PC-9 (cell line): ENCODE measurements at regions of chrX and their contacts with region 1.

Region 1: GRCh38 chrX:12946838-12947544 is 27.9 kb upstream of the TMSB4X start:
- DNase-seq: peak; percentile 87 to 94
- H3K4me3 ChIP-seq: peak overlapping the region; percentile 40; the same call in 1 of the 2 replicates
- H3K27ac ChIP-seq: peak overlapping the region; percentile 98
- H3K4me1 ChIP-seq: peaks cover 35% of the 10 kb centered on the region
- H3K27me3 ChIP-seq: no peaks in the 10 kb centered on the region
- CTCF ChIP-seq: peak; percentile 93

Region 2: DNA sequence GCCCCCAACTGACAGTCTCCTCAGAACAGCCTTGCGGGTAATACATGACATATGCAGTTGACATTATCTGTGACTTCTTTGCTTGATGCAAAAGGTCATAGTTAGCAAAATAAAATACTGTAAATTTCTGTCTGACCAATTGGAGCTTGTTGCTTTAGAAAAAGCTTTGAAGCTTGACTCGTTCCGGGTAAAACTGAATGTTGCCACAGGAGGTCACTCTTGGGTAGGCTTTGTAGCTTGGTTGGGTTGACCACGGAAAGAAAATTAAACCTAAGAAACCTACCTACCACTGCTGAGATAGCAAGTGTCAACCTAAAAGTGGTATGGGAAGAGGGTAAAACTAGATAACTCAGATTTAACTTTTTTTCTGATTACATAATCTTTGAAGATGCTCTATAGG is 132.6 kb before region 1 on chrX:
- CTCF ChIA-PET with region 1: interaction called, 4 read pairs
- POLR2A ChIA-PET with region 1: interaction called, 3 read pairs
- intact Hi-C with region 1: loop called (anchors 2 kb)
- DNase-seq: peak; percentile 44 to 51
- H3K4me3 ChIP-seq: no peak overlapping the region
- H3K27ac ChIP-seq: no peak overlapping the region
- H3K4me1 ChIP-seq: no peaks in the 10 kb centered on the region
- H3K27me3 ChIP-seq: no peaks in the 10 kb centered on the region
- CTCF ChIP-seq: peak; percentile 75

Region 3: DNA sequence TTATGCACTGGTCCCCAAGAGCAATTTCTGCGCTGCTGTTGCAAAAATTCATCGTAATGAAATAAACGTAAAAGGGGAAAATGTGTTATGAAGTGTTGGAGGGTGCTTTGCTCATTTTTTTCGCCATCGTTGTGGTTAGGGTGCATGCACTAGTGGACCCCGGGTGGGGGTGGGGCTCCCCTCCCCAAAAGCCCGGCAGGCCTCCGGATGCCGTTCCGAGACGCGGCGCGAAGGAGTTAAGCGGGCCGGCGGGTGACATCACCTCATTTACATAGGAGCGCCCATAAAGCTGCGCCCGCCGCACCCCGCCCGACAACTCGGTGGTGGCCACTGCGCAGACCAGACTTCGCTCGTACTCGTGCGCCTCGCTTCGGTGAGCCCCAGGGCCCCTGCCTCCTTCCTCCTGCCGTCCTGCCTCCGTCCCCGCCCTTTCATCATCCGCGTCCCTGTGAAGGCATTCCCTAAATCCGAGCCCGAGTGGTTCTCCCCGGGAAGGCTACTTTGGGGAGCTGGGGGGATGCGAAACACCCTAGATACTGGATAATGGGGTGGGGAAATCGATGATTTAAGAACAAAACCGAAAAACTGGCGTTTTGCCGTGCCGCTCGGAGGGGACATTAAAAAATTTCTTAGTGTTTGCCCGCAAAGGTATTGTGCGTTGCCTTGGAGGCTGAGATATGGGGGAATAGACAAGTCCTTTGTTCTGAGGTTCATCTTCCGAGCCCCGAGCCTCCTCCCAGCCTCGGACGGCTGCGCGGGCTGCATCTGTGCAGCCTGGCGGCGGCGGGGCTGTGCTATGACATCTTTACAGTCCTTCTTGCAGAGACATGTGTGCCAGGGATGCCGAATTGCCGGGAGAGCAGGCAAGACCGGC is 28.0 kb after region 1 on chrX and contains the start of gene TMSB4X:
- CTCF ChIA-PET with region 1: interaction called, 14 read pairs
- POLR2A ChIA-PET with region 1: interaction called, 15 read pairs
- intact Hi-C with region 1: loop called (anchors 1 kb)
- DNase-seq: peak; percentile 71 to 85
- H3K4me3 ChIP-seq: peak within 1 kb of the TSS; percentile 99
- H3K27ac ChIP-seq: peak within 1 kb of the TSS; percentile 99
- H3K4me1 ChIP-seq: peaks cover 36% of the 10 kb centered on the region
- H3K27me3 ChIP-seq: no peaks in the 10 kb centered on the region
- CTCF ChIP-seq: no peak
- total RNA-seq, gene TMSB4X: 2,589 and 3,588 TPM in 2 replicates

Region 4: DNA sequence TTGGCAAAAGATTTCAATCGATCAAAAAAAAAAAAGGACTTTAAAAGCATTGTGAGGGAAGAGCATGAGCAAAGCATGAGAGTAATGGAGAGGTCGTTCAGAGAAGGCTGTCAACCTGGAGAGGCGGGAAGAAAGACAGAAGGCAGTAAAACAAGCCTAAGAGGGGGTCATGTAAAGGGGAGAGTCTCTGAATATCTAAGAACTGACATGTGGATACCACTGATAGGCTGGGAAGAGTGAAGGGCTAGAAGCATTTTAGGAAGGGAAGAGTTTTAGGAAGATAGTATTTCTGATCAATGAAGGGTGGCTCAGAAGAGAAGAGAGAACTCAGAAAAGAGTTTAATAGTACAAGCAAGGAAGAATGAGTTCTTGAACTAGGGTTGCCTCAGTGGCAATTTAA is 89.9 kb after region 1 on chrX:
- CTCF ChIA-PET with region 1: no interaction called
- POLR2A ChIA-PET with region 1: no interaction called
- intact Hi-C with region 1: no loop called
- DNase-seq: no peak
- H3K4me3 ChIP-seq: no peak overlapping the region
- H3K27ac ChIP-seq: no peak overlapping the region
- H3K4me1 ChIP-seq: no peaks in the 10 kb centered on the region; the same call in 1 of the 2 replicates
- H3K27me3 ChIP-seq: no peaks in the 10 kb centered on the region
- CTCF ChIP-seq: no peak

Region 5: GRCh38 chrX:13101441-13102139 is 154.6 kb after region 1 on chrX:
- CTCF ChIA-PET with region 1: no interaction called
- POLR2A ChIA-PET with region 1: no interaction called
- intact Hi-C with region 1: loop called (anchors 1 kb)
- DNase-seq: peak; percentile 72 to 93
- H3K4me3 ChIP-seq: no peak overlapping the region; the same call in 1 of the 2 replicates
- H3K27ac ChIP-seq: peak overlapping the region; percentile 96
- H3K4me1 ChIP-seq: peaks cover 48% of the 10 kb centered on the region
- H3K27me3 ChIP-seq: no peaks in the 10 kb centered on the region
- CTCF ChIP-seq: no peak

Region 6: DNA sequence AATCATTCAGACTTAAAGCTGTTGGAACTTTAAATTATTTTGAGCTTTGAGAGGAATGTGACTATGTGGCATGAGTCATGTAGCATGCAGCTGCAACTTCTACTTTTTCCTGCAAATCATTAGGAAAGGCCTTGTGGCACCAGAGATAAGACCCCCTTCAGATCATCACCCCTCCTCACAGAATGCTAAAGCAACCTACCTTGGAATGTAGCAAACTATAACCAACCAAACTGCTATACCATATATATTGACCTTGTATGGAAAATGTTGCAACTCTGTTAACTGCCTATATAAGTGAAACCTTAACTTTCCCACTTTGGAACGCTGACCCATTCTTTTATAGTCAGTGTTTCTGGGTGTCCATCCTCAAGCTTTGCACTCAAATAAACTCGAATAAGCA is 340.8 kb after region 1 on chrX:
- CTCF ChIA-PET with region 1: no interaction called
- POLR2A ChIA-PET with region 1: interaction called, 9 read pairs
- intact Hi-C with region 1: loop called (anchors 1 kb)
- DNase-seq: peak; percentile 11 to 37
- H3K4me3 ChIP-seq: no peak overlapping the region
- H3K27ac ChIP-seq: peak overlapping the region; percentile 57
- H3K4me1 ChIP-seq: peaks cover 21% of the 10 kb centered on the region
- H3K27me3 ChIP-seq: no peaks in the 10 kb centered on the region
- CTCF ChIP-seq: no peak